Caco-2 (cell line): ENCODE measurements at regions of chr5 and their contacts with region 1.

Region 1: GRCh38 chr5:101678481-101679193 is 617.4 kb downstream of the SLCO4C1 start:
- DNase-seq: peak; percentile 81 to 86
- H3K4me3 ChIP-seq: peak overlapping the region; percentile 31
- H3K4me3 Mint-ChIP-seq: peak overlapping the region; percentile 85
- H3K27ac Mint-ChIP-seq: peak overlapping the region; percentile 94
- H3K4me1 ChIP-seq: peaks cover 6% of the 10 kb centered on the region; the same call in 1 of the 2 replicates
- H3K4me1 Mint-ChIP-seq: peaks cover 11% of the 10 kb centered on the region
- H3K27me3 ChIP-seq: no peaks in the 10 kb centered on the region
- H3K27me3 Mint-ChIP-seq: no peaks in the 10 kb centered on the region
- CTCF ChIP-seq: peak; percentile 90 to 92

Region 2: GRCh38 chr5:100623719-100624118 is 1054.9 kb before region 1 on chr5:
- CTCF ChIA-PET with region 1: no interaction called
- POLR2A ChIA-PET with region 1: no interaction called
- intact Hi-C with region 1: loop called (anchors 2 kb)
- DNase-seq: peak in 1 of 2 experiments; percentile 10
- H3K4me3 ChIP-seq: no peak overlapping the region
- H3K4me3 Mint-ChIP-seq: no peak overlapping the region
- H3K27ac Mint-ChIP-seq: no peak overlapping the region
- H3K4me1 ChIP-seq: no peaks in the 10 kb centered on the region
- H3K4me1 Mint-ChIP-seq: no peaks in the 10 kb centered on the region
- H3K27me3 ChIP-seq: no peaks in the 10 kb centered on the region
- H3K27me3 Mint-ChIP-seq: no peaks in the 10 kb centered on the region
- CTCF ChIP-seq: peak; percentile 34 to 45

Region 3: GRCh38 chr5:101346906-101347305 is 331.7 kb before region 1 on chr5:
- CTCF ChIA-PET with region 1: interaction called, 4 read pairs
- POLR2A ChIA-PET with region 1: no interaction called
- intact Hi-C with region 1: loop called (anchors 1 kb)
- DNase-seq: no peak
- H3K4me3 ChIP-seq: no peak overlapping the region
- H3K4me3 Mint-ChIP-seq: no peak overlapping the region
- H3K27ac Mint-ChIP-seq: no peak overlapping the region
- H3K4me1 ChIP-seq: no peaks in the 10 kb centered on the region
- H3K4me1 Mint-ChIP-seq: peaks cover 6% of the 10 kb centered on the region
- H3K27me3 ChIP-seq: no peaks in the 10 kb centered on the region
- H3K27me3 Mint-ChIP-seq: no peaks in the 10 kb centered on the region
- CTCF ChIP-seq: no peak

Region 4: GRCh38 chr5:101435768-101436167 is 242.9 kb before region 1 on chr5:
- CTCF ChIA-PET with region 1: no interaction called
- POLR2A ChIA-PET with region 1: no interaction called
- intact Hi-C with region 1: loop called (anchors 5 kb)
- DNase-seq: no peak
- H3K4me3 ChIP-seq: no peak overlapping the region
- H3K4me3 Mint-ChIP-seq: no peak overlapping the region
- H3K27ac Mint-ChIP-seq: no peak overlapping the region
- H3K4me1 ChIP-seq: peaks cover 10% of the 10 kb centered on the region; the same call in 1 of the 2 replicates
- H3K4me1 Mint-ChIP-seq: no peaks in the 10 kb centered on the region
- H3K27me3 ChIP-seq: no peaks in the 10 kb centered on the region
- H3K27me3 Mint-ChIP-seq: no peaks in the 10 kb centered on the region
- CTCF ChIP-seq: no peak

Region 5: DNA sequence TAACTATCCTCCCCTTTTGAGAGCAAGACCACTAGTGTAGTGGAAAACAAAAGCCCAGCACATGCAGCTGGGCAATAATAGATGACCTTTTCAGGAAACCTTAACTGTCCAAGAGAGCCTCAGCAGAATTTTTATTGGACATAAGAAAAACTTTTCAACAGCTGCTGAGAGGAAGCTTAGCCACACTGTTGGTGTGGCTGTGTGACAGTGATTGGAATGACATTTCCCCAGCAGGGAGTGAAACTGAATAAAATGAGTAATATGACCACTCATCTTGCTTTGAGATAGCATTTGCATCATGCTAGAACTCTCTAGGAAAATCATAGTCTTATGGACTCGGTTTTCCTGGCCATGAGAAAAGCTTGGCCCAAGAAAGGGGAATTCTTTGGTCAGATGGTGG is 70.3 kb before region 1 on chr5:
- CTCF ChIA-PET with region 1: no interaction called
- POLR2A ChIA-PET with region 1: no interaction called
- intact Hi-C with region 1: no loop called
- DNase-seq: no peak
- H3K4me3 ChIP-seq: no peak overlapping the region
- H3K4me3 Mint-ChIP-seq: no peak overlapping the region
- H3K27ac Mint-ChIP-seq: peak overlapping the region; percentile 40
- H3K4me1 ChIP-seq: peaks cover 7% of the 10 kb centered on the region; the same call in 1 of the 2 replicates
- H3K4me1 Mint-ChIP-seq: peaks cover 6% of the 10 kb centered on the region
- H3K27me3 ChIP-seq: no peaks in the 10 kb centered on the region
- H3K27me3 Mint-ChIP-seq: no peaks in the 10 kb centered on the region
- CTCF ChIP-seq: no peak

Region 6: GRCh38 chr5:101663554-101663953 is 15.1 kb before region 1 on chr5:
- CTCF ChIA-PET with region 1: interaction called, 4 read pairs
- POLR2A ChIA-PET with region 1: no interaction called
- intact Hi-C with region 1: loop called (anchors 1 kb)
- DNase-seq: no peak
- H3K4me3 ChIP-seq: no peak overlapping the region
- H3K4me3 Mint-ChIP-seq: peak overlapping the region; percentile 45
- H3K27ac Mint-ChIP-seq: peak overlapping the region; percentile 84
- H3K4me1 ChIP-seq: peaks cover 53% of the 10 kb centered on the region
- H3K4me1 Mint-ChIP-seq: peaks cover 28% of the 10 kb centered on the region
- H3K27me3 ChIP-seq: no peaks in the 10 kb centered on the region
- H3K27me3 Mint-ChIP-seq: no peaks in the 10 kb centered on the region
- CTCF ChIP-seq: no peak

Region 7: GRCh38 chr5:101915554-101915953 is 236.9 kb after region 1 on chr5:
- CTCF ChIA-PET with region 1: no interaction called
- POLR2A ChIA-PET with region 1: no interaction called
- intact Hi-C with region 1: no loop called
- DNase-seq: no peak
- H3K4me3 ChIP-seq: no peak overlapping the region
- H3K4me3 Mint-ChIP-seq: peak overlapping the region; percentile 39
- H3K27ac Mint-ChIP-seq: no peak overlapping the region
- H3K4me1 ChIP-seq: no peaks in the 10 kb centered on the region
- H3K4me1 Mint-ChIP-seq: peaks cover 6% of the 10 kb centered on the region
- H3K27me3 ChIP-seq: no peaks in the 10 kb centered on the region
- H3K27me3 Mint-ChIP-seq: no peaks in the 10 kb centered on the region
- CTCF ChIP-seq: no peak